ENCODE measurements at regions of chr4 and their contacts with region 1.

Region 1: GRCh38 chr4:86878640-86879039 is 13.6 kb downstream of the C4orf36 start:
- DNase-seq: no peak
- ATAC-seq: peak; percentile 90
- H3K4me3 Mint-ChIP-seq: no peak overlapping the region
- H3K27ac Mint-ChIP-seq: no peak overlapping the region
- H3K4me1 Mint-ChIP-seq: peaks cover 7% of the 10 kb centered on the region
- H3K27me3 Mint-ChIP-seq: no peaks in the 10 kb centered on the region; the same call in 1 of the 2 replicates
- CTCF ChIP-seq: peak; percentile 17; the same call in 1 of the 2 replicates

Region 2: DNA sequence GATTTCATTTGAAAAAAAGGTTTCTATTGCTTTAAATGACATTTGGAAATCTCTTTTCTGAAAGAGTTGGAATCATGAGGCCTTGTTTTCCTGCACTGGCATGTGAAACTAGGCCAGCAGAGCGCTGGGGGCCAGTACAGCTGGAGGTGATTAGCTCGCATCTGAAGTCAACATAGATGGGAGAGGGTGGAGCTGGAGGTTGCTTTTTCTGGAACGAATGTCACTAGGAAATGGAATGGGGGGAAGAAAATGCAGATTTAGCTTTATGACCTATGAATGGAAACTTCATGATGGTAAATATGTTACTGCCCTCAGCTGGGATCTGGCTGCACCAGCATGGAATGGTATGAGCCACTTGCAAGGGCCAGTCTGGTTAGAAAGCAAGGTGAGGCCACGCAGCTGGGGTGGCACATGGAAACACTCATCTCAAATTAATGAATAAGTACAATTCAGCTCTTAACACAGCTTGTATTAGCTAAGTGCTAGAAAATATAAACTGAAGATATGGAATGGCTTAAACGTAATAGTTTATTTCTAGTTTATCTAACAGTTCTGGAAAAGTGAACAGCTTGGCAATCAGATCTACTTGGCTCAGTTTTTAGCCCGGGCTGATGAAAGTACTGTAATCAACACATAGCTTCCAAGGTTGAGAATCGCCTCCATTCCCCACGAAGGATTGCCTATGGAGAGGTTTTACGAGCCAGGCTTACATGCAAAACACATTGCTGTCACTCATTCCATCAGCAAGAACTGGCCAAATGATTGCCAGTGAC is 62.0 kb before region 1 on chr4:
- CTCF ChIA-PET with region 1: interaction called, 14 read pairs
- POLR2A ChIA-PET with region 1: no interaction called
- DNase-seq: no peak
- ATAC-seq: no peak
- H3K4me3 Mint-ChIP-seq: no peak overlapping the region
- H3K27ac Mint-ChIP-seq: no peak overlapping the region
- H3K4me1 Mint-ChIP-seq: no peaks in the 10 kb centered on the region
- H3K27me3 Mint-ChIP-seq: no peaks in the 10 kb centered on the region
- CTCF ChIP-seq: no peak

Region 3: DNA sequence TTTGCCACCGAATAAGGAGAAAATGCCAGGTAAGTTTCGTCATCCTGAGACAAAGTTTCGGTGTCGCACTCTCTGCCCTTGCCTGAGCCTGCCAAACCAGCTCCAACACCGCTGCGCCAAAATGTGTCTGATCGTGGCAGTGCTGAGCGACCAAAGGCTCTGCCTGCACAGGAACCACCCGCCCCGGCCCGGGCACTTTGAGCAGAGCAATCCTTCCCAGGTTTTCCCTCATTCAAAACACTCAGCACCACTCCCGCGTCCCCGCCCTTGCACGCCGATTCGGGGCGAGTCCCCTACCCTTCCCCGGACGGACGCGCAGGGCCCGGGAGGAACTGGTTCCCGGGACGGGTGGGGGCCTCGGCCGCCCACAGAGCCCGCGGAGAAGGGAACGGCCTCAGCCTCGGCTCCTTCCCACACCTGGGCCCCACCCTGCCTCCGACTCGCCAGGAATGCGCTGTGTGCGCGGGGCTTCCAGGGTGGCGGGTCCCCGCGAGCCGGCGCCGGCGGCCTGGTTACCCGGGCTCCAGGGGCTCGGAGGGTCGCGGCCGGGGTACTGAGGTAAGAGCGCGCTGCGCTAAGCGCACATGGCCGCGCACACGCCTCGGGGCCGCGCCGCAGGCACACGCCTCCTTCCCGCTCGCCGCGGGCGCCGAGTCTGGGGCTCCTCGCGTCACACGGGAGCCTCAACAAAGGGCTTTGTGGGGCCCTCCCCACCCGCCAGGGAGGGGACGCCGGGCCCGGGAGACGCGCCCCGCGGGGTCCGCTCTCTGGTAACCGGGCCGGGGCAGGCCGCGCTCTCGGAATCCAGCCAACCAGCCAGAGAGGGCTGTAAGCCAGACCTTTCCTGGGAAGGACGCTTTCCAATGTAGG is 13.4 kb after region 1 on chr4 and contains the start of gene C4orf36:
- CTCF ChIA-PET with region 1: interaction called, 12 read pairs
- POLR2A ChIA-PET with region 1: no interaction called
- DNase-seq: peak; percentile 77
- ATAC-seq: peak; percentile 82
- H3K4me3 Mint-ChIP-seq: peak within 1 kb of the TSS; percentile 75
- H3K27ac Mint-ChIP-seq: peak within 1 kb of the TSS; percentile 82
- H3K4me1 Mint-ChIP-seq: peaks cover 19% of the 10 kb centered on the region
- H3K27me3 Mint-ChIP-seq: peaks cover 15% of the 10 kb centered on the region
- CTCF ChIP-seq: no peak
- total RNA-seq, gene C4orf36: 0.73 to 1.5 TPM (median 0.79 TPM) in 3 replicates

Measured in WTC11 (cell line).